Kidney (tissue), 22 donors: ENCODE measurements at regions of chr10 and their contacts with region 1.

Region 1: GRCh38 chr10:124539935-124540641 is 78.5 kb downstream of the LHPP start:
- DNase-seq: peak; percentile 65 to 88 (median 84)
- H3K4me3 ChIP-seq: no peak overlapping the region
- H3K27ac ChIP-seq: no peak overlapping the region
- H3K4me1 ChIP-seq: peaks cover 0 to 5% (median 0%) of the 10 kb centered on the region in 3 donors
- H3K27me3 ChIP-seq: no peaks in the 10 kb centered on the region
- CTCF ChIP-seq: peak; percentile 62

Region 2: GRCh38 chr10:125006921-125007426 is 466.9 kb after region 1 on chr10:
- intact Hi-C with region 1: loop called (anchors 5 kb)
- DNase-seq: peak; percentile 65 to 87 (median 81)
- H3K4me3 ChIP-seq: no peak overlapping the region
- H3K27ac ChIP-seq: peak overlapping the region in 1 of 2 donors; percentile 8
- H3K4me1 ChIP-seq: peaks cover 0 to 11% (median 0%) of the 10 kb centered on the region in 3 donors
- H3K27me3 ChIP-seq: no peaks in the 10 kb centered on the region
- CTCF ChIP-seq: no peak